ENCODE measurements at regions of chr12 and their contacts with region 1.

Region 1: GRCh38 chr12:109858764-109859163 is 21.6 kb downstream of the GLTP start:
- DNase-seq: no peak
- H3K4me3 ChIP-seq: no peak overlapping the region
- CTCF ChIP-seq: no peak
- POLR2A ChIP-seq: no peak

Region 2: GRCh38 chr12:109727039-109727723 is 131.6 kb before region 1 on chr12:
- intact Hi-C with region 1: no loop called
- DNase-seq: no peak
- H3K4me3 ChIP-seq: no peak overlapping the region
- CTCF ChIP-seq: no peak
- POLR2A ChIP-seq: no peak

Region 3: GRCh38 chr12:109910969-109911348 is 52.2 kb after region 1 on chr12:
- intact Hi-C with region 1: loop called (anchors 10 kb)
- DNase-seq: no peak
- H3K4me3 ChIP-seq: no peak overlapping the region
- CTCF ChIP-seq: no peak
- POLR2A ChIP-seq: no peak